ENCODE measurements at regions of chr1 and their contacts with region 1.

Region 1: DNA sequence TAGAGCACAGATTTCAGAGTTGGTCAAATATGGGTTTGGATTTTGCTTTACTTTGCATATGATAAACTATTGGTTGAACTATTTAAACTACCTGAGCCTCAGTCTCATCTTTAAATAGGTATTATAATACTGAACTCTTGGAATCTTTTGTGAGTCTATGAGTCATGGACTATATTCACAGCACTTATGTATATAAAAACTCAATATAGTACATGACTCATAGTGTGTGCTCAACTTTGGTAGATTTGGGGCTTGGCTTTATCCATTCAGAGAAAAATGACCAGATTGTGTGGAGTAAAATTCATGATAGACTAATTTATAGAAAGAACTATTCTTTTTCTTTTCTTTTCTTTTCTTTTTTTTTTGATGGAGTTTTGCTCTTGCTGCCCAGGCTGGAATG is 28.7 kb downstream of the FCRL3 start:
- DNase-seq: no peak
- H3K4me3 ChIP-seq: no peak overlapping the region
- CTCF ChIP-seq: no peak
- POLR2A ChIP-seq: no peak

Region 2: GRCh38 chr1:157597959-157598667 is 73.8 kb before region 1 on chr1 and contains the start of gene FCRL4:
- intact Hi-C with region 1: loop called (anchors 2 kb)
- DNase-seq: no peak
- H3K4me3 ChIP-seq: no peak within 1 kb of the TSS
- CTCF ChIP-seq: no peak
- POLR2A ChIP-seq: no peak
- total RNA-seq, gene FCRL4: not detected

Measured in lower leg skin (tissue), 4 donors.